ENCODE measurements at regions of chr10 and their contacts with region 1.

Region 1: GRCh38 chr10:102660888-102661657 is 16.8 kb downstream of the TRIM8 start:
- DNase-seq: no peak
- H3K27ac ChIP-seq: peak overlapping the region; percentile 82
- CTCF ChIP-seq: no peak

Region 2: GRCh38 chr10:101367569-101368453 is 1293.3 kb before region 1 on chr10:
- CTCF ChIA-PET with region 1: no interaction called
- POLR2A ChIA-PET with region 1: interaction called, 16 read pairs
- DNase-seq: peak; percentile 98
- H3K27ac ChIP-seq: peak overlapping the region; percentile 84
- CTCF ChIP-seq: no peak

Region 3: DNA sequence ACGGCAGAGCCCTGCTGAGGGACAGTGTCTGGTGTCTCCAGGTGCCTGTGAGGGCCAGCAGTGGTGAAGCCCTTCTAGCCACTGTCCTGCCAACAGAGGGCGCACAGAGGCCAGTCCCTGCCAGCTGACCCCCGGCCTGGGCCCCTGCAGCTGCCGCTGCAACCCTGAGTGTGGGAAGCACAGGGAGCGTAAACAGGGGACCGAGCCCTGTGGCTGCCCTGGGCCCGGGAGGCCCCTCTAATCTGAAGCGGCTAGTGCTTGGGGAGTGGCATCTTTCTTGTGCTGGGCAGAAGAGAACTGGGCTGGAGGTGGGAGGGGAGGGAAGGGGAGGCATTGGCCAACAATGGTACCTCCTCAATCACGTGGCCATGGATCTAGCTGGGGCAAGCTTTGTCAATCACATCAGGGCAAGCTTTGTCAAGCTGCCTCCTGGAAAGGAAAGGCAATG is 17.8 kb after region 1 on chr10:
- CTCF ChIA-PET with region 1: interaction called, 6 read pairs
- POLR2A ChIA-PET with region 1: interaction called, 11 read pairs
- DNase-seq: no peak
- H3K27ac ChIP-seq: peak overlapping the region; percentile 63
- CTCF ChIP-seq: peak; percentile 73